Heart right ventricle (tissue), 16 donors: ENCODE measurements at regions of chr2 and their contacts with region 1.

Region 1: GRCh38 chr2:98157557-98157956 is 70.6 kb downstream of the VWA3B start:
- DNase-seq: no peak
- ATAC-seq: no peak
- H3K4me3 ChIP-seq: no peak overlapping the region
- H3K27ac ChIP-seq: peak overlapping the region; percentile 32 to 94 (median 85)
- H3K4me1 ChIP-seq: peaks cover 11 to 88% (median 51%) of the 10 kb centered on the region in 9 donors
- H3K27me3 ChIP-seq: no peaks in the 10 kb centered on the region
- CTCF ChIP-seq: no peak

Region 2: DNA sequence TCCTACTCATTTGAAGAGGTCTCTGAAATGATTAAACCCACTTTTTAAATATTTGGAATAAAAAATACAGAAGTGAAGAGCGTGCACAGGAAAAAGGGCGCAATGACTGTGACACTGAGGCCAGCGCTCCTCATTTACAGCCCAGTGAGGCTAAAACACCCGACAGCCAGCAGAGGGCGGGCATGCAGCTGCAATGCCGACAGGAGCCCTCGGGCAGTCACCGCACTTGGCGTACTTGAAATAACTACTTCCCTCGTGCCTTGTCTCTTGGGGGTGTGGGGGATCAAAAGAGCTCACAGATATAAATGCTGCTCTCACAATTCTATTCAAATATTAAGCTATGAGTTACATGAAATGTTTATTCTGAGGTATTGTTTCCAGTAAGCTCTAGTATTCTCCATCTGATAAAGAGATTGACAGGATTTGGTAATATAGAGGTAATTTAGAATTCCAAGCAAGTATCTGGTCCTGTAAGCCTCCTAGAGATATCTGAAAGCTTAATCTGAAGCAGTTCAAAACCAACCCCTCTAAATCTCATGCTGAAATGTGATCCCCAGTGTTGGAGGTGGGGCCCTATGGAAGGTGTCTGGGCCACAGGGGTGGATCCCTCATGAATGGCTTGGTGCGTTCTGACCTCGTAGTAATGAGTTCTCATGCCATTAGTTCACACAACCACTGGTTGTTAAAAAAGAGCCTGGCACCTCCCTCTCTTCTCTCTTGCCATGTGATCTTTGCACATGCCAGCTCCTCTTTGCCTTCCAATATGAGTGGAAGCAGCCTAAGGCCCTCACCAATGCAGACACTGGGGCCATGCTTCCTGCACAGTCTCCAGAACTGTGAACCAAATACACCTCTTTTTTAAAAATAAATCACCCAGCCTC is 350.6 kb before region 1 on chr2:
- intact Hi-C with region 1: loop called in 1 of 10 experiments (anchors 5 kb)
- DNase-seq: peak; percentile 82 to 87
- ATAC-seq: peak; percentile 91 to 99 (median 97)
- H3K4me3 ChIP-seq: no peak overlapping the region
- H3K27ac ChIP-seq: peak overlapping the region in 2 of 10 donors; percentile 2 to 31
- H3K4me1 ChIP-seq: peaks cover 0 to 14% (median 4%) of the 10 kb centered on the region in 9 donors
- H3K27me3 ChIP-seq: no peaks in the 10 kb centered on the region
- CTCF ChIP-seq: peak; percentile 66 to 98 (median 95)

Region 3: DNA sequence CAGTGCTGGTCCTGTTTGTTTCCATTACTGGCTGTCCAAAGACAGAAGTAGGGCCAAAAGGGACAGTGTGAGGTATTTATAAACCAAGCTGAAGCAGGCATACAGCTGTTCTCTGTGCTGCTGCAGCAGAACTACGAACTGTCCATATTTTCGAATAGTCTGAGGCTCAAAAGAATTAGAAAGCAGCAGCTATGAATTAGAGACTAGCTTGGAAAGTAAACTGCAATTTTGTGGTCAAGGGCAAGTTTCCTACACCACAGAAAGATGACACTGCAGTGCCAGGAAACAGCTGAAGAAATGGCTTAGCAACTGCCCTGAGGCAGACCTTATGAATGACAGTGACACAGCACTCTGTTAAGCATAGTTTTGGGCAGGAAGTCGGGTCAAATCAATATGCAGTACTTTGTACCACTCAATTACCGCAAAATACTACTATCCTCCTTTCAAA is 287.1 kb before region 1 on chr2:
- intact Hi-C with region 1: loop called in 1 of 10 experiments (anchors 5 kb)
- DNase-seq: peak in 1 of 2 donors; percentile 26
- ATAC-seq: peak; percentile 59 to 95 (median 90)
- H3K4me3 ChIP-seq: no peak overlapping the region
- H3K27ac ChIP-seq: peak overlapping the region; percentile 68 to 89 (median 78)
- H3K4me1 ChIP-seq: peaks cover 5 to 48% (median 37%) of the 10 kb centered on the region in 9 donors
- H3K27me3 ChIP-seq: no peaks in the 10 kb centered on the region
- CTCF ChIP-seq: peak in 1 of 9 donors; percentile 8

Region 4: DNA sequence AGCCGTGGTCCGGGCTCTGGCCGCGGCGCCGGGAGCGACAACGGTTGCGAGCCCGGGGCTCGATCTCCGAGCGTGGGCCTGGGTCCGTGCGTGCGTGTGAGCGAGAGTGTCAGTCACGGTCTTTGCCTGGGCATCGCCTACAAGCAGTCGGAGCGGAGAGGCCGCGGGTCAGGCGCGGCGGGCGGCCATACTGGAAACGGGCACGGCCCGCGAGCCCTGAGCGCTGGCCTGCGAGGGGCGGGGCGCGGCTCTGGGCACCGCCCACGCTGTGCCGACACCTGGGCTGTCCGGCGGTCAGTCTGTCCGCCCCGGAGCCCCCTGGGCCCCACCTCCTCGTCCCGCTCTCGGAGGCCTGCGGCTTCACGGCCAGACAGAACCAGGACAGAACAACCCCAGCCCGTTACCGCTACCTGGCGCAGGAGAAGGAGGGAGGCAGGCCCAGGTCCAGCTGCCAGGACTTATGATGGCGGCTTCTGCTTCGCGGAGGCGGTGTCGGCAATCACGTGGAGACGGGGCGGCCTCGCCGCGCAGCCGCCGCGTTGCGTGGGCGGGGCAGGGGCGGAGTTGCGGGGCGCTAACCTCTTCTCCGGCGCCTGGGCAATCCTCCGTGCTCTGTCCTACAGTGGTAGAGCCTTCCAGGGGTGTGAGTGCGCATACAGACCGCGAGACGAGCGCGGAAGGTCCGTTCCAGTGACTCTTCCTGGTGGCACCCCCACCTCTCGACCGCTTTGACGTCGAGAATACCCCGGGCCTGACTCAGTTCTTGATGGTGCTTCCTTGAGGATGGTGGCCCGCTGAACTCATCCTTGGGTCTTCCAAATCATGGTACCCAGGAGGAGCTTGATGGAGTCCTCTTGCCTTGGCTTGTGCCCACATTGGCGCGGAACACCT is 161.6 kb before region 1 on chr2 and contains the start of gene TMEM131:
- intact Hi-C with region 1: loop called in 2 of 10 experiments (anchors 5 to 10 kb)
- DNase-seq: peak; percentile 95 to 96
- ATAC-seq: peak; percentile 97 to 99 (median 97)
- H3K4me3 ChIP-seq: peak within 1 kb of the TSS; percentile 61 to 91 (median 86)
- H3K27ac ChIP-seq: peak within 1 kb of the TSS; percentile 94 to 99 (median 96)
- H3K4me1 ChIP-seq: peaks cover 0 to 45% (median 31%) of the 10 kb centered on the region in 9 donors
- H3K27me3 ChIP-seq: no peaks in the 10 kb centered on the region
- CTCF ChIP-seq: no peak
- total RNA-seq, gene TMEM131: 26.3 to 34.3 (median 30.7) TPM

Region 5: DNA sequence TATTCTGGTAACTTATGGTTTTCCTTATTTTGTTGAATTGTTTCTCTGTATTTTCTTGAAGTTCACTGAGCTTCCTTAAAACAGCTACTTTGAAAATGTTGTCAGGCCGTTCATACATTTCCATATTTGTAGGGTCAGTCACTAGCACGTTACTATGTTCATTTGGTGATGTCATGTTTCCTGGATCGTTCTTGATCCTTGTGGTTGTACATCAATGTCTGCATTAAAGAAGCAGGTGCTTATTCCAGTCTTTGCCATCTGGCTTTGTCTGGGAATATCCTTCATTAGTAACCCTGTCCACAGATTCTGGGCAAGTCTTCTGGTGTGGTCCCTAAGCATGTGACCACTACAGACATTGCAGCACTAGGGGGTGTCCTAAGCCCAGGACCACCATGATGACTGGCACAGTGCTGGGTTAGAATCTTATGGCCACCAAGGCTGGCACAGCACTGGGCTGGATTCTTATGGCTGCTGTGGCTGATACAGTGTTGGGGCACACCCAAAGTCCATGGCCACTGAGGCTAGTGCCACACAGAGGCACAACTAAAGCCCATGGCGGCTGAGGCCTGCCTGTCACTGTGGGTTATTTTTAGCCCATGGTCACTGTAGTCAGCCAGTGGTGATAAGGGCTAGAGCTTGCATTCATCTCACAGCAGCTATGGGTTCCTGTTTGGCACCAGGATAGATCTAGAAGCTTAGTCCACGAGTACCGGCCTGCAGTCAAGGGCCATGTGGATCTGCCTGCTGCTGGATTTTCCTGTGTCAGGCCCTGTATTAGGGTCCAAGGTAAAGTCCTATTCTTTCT is 57.4 kb before region 1 on chr2:
- intact Hi-C with region 1: loop called in 1 of 10 experiments (anchors 10 kb)
- DNase-seq: no peak
- ATAC-seq: peak in 6 of 8 donors; percentile 38 to 87 (median 80)
- H3K4me3 ChIP-seq: no peak overlapping the region
- H3K27ac ChIP-seq: no peak overlapping the region
- H3K4me1 ChIP-seq: peaks cover 0 to 8% (median 0%) of the 10 kb centered on the region in 9 donors
- H3K27me3 ChIP-seq: no peaks in the 10 kb centered on the region
- CTCF ChIP-seq: no peak

Region 6: GRCh38 chr2:98234776-98235175 is 77.2 kb after region 1 on chr2:
- intact Hi-C with region 1: loop called in 1 of 10 experiments (anchors 10 kb)
- DNase-seq: no peak
- ATAC-seq: peak in 2 of 8 donors; percentile 43 to 59
- H3K4me3 ChIP-seq: no peak overlapping the region
- H3K27ac ChIP-seq: no peak overlapping the region
- H3K4me1 ChIP-seq: peaks cover 0 to 15% (median 0%) of the 10 kb centered on the region in 9 donors
- H3K27me3 ChIP-seq: no peaks in the 10 kb centered on the region
- CTCF ChIP-seq: no peak

Region 7: GRCh38 chr2:98253461-98254070 is 96.0 kb after region 1 on chr2:
- intact Hi-C with region 1: no loop called
- DNase-seq: peak; percentile 15 to 18
- ATAC-seq: peak in 1 of 8 donors; percentile 39
- H3K4me3 ChIP-seq: no peak overlapping the region
- H3K27ac ChIP-seq: no peak overlapping the region
- H3K4me1 ChIP-seq: peaks cover 0 to 8% (median 5%) of the 10 kb centered on the region in 9 donors
- H3K27me3 ChIP-seq: no peaks in the 10 kb centered on the region
- CTCF ChIP-seq: no peak

Region 8: GRCh38 chr2:98883780-98884211 is 726.2 kb after region 1 on chr2:
- intact Hi-C with region 1: no loop called
- DNase-seq: no peak
- ATAC-seq: no peak
- H3K4me3 ChIP-seq: no peak overlapping the region
- H3K27ac ChIP-seq: no peak overlapping the region
- H3K4me1 ChIP-seq: no peaks in the 10 kb centered on the region
- H3K27me3 ChIP-seq: peaks cover 0 to 14% (median 0%) of the 10 kb centered on the region in 7 donors
- CTCF ChIP-seq: no peak